ENCODE measurements at regions of chr19 and their contacts with region 1.

Region 1: DNA sequence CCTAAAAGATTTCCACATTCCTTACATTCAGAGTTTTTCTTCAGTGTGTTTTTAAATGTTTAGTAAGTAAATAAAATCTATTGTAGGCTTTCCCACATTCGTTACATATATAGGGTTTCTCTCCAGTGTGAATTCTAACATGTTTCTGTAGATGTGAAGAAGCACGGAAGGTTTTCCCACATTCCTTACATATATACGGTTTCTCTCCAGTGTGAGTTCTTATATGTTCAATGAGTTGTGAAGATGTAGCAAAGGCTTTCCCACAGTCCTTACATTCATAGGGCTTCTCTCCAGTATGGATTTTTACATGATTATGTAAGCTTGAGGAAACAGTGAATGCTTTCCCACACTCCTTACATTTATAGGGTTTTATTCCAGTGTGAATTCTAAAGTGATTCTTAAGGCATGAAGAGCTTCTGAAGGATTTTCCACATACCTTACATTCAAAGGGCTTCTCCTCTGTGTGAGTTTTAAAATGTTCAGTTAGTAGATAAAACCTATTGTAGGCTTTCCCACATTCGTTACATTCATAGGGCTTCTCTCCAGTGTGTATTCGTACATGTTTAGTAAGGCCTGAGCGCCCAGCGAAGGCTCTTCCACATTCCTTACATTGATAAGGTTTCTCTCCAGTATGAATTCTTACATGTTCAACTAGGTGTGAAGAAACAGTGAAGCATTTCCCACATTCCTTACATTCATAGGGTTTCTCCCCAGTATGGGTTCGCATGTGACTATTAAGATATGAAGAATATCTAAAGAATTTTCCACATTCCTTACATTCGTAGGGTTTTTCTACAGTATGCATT is 18.2 kb downstream of the ZNF121 start:
- DNase-seq: no peak
- ATAC-seq: no peak
- H3K4me3 ChIP-seq: no peak overlapping the region
- H3K4me3 Mint-ChIP-seq: no peak overlapping the region
- H3K27ac ChIP-seq: no peak overlapping the region
- H3K27ac Mint-ChIP-seq: peak overlapping the region in 1 of 2 donors; percentile 23
- H3K4me1 ChIP-seq: no peaks in the 10 kb centered on the region
- H3K4me1 Mint-ChIP-seq: peaks cover 6 to 9% of the 10 kb centered on the region in 2 donors
- H3K27me3 ChIP-seq: no peaks in the 10 kb centered on the region
- H3K27me3 Mint-ChIP-seq: no peaks in the 10 kb centered on the region
- CTCF ChIP-seq: no peak

Region 2: GRCh38 chr19:9205501-9206113 is 360.5 kb before region 1 on chr19:
- intact Hi-C with region 1: no loop called
- DNase-seq: peak; percentile 55 to 75
- ATAC-seq: peak; percentile 64 to 81 (median 80)
- H3K4me3 ChIP-seq: no peak overlapping the region
- H3K4me3 Mint-ChIP-seq: no peak overlapping the region
- H3K27ac ChIP-seq: no peak overlapping the region
- H3K27ac Mint-ChIP-seq: peak overlapping the region in 1 of 2 donors; percentile 58
- H3K4me1 ChIP-seq: peaks cover 5% of the 10 kb centered on the region
- H3K4me1 Mint-ChIP-seq: peaks cover 6 to 7% of the 10 kb centered on the region in 2 donors
- H3K27me3 ChIP-seq: no peaks in the 10 kb centered on the region
- H3K27me3 Mint-ChIP-seq: peaks cover 15 to 19% of the 10 kb centered on the region in 2 donors
- CTCF ChIP-seq: peak; percentile 89

Region 3: GRCh38 chr19:9219489-9219888 is 346.6 kb before region 1 on chr19 and contains the start of gene OR7D4:
- intact Hi-C with region 1: no loop called
- DNase-seq: no peak
- ATAC-seq: no peak
- H3K4me3 ChIP-seq: no peak within 1 kb of the TSS
- H3K4me3 Mint-ChIP-seq: no peak within 1 kb of the TSS
- H3K27ac ChIP-seq: no peak within 1 kb of the TSS
- H3K27ac Mint-ChIP-seq: no peak within 1 kb of the TSS
- H3K4me1 ChIP-seq: no peaks in the 10 kb centered on the region
- H3K4me1 Mint-ChIP-seq: no peaks in the 10 kb centered on the region
- H3K27me3 ChIP-seq: no peaks in the 10 kb centered on the region
- H3K27me3 Mint-ChIP-seq: peaks cover 11 to 16% of the 10 kb centered on the region in 2 donors
- CTCF ChIP-seq: no peak
- total RNA-seq, gene OR7D4: not detected

Region 4: GRCh38 chr19:9354651-9355050 is 211.5 kb before region 1 on chr19:
- intact Hi-C with region 1: no loop called
- DNase-seq: no peak
- ATAC-seq: no peak
- H3K4me3 ChIP-seq: no peak overlapping the region
- H3K4me3 Mint-ChIP-seq: no peak overlapping the region
- H3K27ac ChIP-seq: no peak overlapping the region
- H3K27ac Mint-ChIP-seq: no peak overlapping the region
- H3K4me1 ChIP-seq: no peaks in the 10 kb centered on the region
- H3K4me1 Mint-ChIP-seq: no peaks in the 10 kb centered on the region
- H3K27me3 ChIP-seq: no peaks in the 10 kb centered on the region
- H3K27me3 Mint-ChIP-seq: no peaks in the 10 kb centered on the region
- CTCF ChIP-seq: no peak

Region 5: GRCh38 chr19:9523885-9524474 is 42.1 kb before region 1 on chr19:
- intact Hi-C with region 1: loop called (anchors 5 kb)
- DNase-seq: no peak
- ATAC-seq: no peak
- H3K4me3 ChIP-seq: no peak overlapping the region
- H3K4me3 Mint-ChIP-seq: no peak overlapping the region
- H3K27ac ChIP-seq: no peak overlapping the region
- H3K27ac Mint-ChIP-seq: no peak overlapping the region
- H3K4me1 ChIP-seq: no peaks in the 10 kb centered on the region
- H3K4me1 Mint-ChIP-seq: no peaks in the 10 kb centered on the region
- H3K27me3 ChIP-seq: no peaks in the 10 kb centered on the region
- H3K27me3 Mint-ChIP-seq: no peaks in the 10 kb centered on the region
- CTCF ChIP-seq: no peak

Region 6: GRCh38 chr19:9834726-9835506 is 268.8 kb after region 1 on chr19 and contains the start of gene PIN1:
- intact Hi-C with region 1: no loop called
- DNase-seq: peak; percentile 99
- ATAC-seq: peak; percentile 95 to 99 (median 96)
- H3K4me3 ChIP-seq: peak within 1 kb of the TSS; percentile 59
- H3K4me3 Mint-ChIP-seq: peak within 1 kb of the TSS; percentile 85
- H3K27ac ChIP-seq: peak within 1 kb of the TSS; percentile 70
- H3K27ac Mint-ChIP-seq: peak within 1 kb of the TSS; percentile 85 to 89
- H3K4me1 ChIP-seq: peaks cover 17% of the 10 kb centered on the region
- H3K4me1 Mint-ChIP-seq: peaks cover 12 to 22% of the 10 kb centered on the region in 2 donors
- H3K27me3 ChIP-seq: no peaks in the 10 kb centered on the region
- H3K27me3 Mint-ChIP-seq: no peaks in the 10 kb centered on the region
- CTCF ChIP-seq: peak; percentile 21
- total RNA-seq, gene PIN1: 68.3 to 82.6 (median 74.8) TPM